WTC11 (cell line): ENCODE measurements at regions of chr16 and their contacts with region 1.

Region 1: GRCh38 chr16:87636072-87636684 is 33.9 kb downstream of the JPH3 start:
- DNase-seq: peak; percentile 88
- ATAC-seq: peak; percentile 91
- H3K4me3 Mint-ChIP-seq: peak overlapping the region; percentile 43
- H3K27ac Mint-ChIP-seq: no peak overlapping the region
- H3K4me1 Mint-ChIP-seq: peaks cover 9% of the 10 kb centered on the region
- H3K27me3 Mint-ChIP-seq: no peaks in the 10 kb centered on the region
- CTCF ChIP-seq: peak; percentile 35; the same call in 1 of the 2 replicates

Region 2: DNA sequence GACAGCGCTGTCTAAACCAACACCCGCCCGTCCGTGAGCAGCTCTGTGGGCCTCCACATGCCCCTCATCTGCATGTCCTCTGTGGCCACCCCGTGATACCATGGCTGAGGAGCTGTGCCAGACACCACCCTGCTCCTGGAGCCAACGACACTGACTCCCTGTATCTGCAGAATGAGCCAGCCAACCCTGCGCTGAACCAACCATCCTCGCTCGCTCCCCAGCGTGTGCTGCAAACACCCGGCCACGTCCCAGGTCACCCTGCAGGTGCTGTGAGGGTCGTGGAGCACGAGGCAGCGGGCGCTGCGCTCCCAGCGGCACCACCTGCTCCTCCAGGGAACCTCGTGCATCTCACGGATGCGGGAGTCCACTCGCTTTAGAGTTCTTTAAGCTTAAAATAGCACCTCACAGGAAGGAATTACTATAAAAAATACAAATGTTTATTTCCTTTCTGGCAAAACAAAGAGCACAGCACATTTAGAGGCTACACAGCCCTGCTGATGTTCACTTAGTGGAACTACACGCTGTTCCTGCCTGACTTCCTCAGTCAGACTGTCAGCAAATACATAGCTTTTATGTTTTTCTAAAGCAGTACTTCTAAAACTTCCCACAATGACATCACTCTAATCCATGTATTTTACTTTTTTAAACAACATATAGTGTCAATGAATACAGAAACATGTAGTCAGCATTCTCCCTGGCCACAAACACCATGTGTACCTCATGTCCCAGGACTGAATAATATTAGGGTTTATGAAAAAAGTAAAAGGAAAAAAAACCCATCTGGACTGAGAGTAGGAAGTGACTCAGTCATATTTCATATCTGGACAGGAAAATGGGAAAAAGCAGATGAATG is 200.6 kb before region 1 on chr16:
- CTCF ChIA-PET with region 1: interaction called, 11 read pairs
- POLR2A ChIA-PET with region 1: no interaction called
- DNase-seq: no peak
- ATAC-seq: no peak
- H3K4me3 Mint-ChIP-seq: no peak overlapping the region
- H3K27ac Mint-ChIP-seq: no peak overlapping the region; the same call in 1 of the 2 replicates
- H3K4me1 Mint-ChIP-seq: peaks cover 12% of the 10 kb centered on the region
- H3K27me3 Mint-ChIP-seq: no peaks in the 10 kb centered on the region
- CTCF ChIP-seq: no peak

Region 3: GRCh38 chr16:87550496-87550961 is 85.6 kb before region 1 on chr16:
- CTCF ChIA-PET with region 1: interaction called, 10 read pairs
- POLR2A ChIA-PET with region 1: no interaction called
- DNase-seq: peak; percentile 79
- ATAC-seq: peak; percentile 71
- H3K4me3 Mint-ChIP-seq: no peak overlapping the region
- H3K27ac Mint-ChIP-seq: no peak overlapping the region
- H3K4me1 Mint-ChIP-seq: no peaks in the 10 kb centered on the region
- H3K27me3 Mint-ChIP-seq: peaks cover 2% of the 10 kb centered on the region
- CTCF ChIP-seq: peak; percentile 98

Region 4: GRCh38 chr16:87581833-87582203 is 54.4 kb before region 1 on chr16:
- CTCF ChIA-PET with region 1: interaction called, 235 read pairs
- POLR2A ChIA-PET with region 1: no interaction called
- DNase-seq: no peak
- ATAC-seq: no peak
- H3K4me3 Mint-ChIP-seq: no peak overlapping the region
- H3K27ac Mint-ChIP-seq: 0 out of 2 replicates have a peak overlapping the region, but pooled peaks have one; percentile 9
- H3K4me1 Mint-ChIP-seq: peaks cover 22% of the 10 kb centered on the region
- H3K27me3 Mint-ChIP-seq: no peaks in the 10 kb centered on the region
- CTCF ChIP-seq: no peak

Region 5: DNA sequence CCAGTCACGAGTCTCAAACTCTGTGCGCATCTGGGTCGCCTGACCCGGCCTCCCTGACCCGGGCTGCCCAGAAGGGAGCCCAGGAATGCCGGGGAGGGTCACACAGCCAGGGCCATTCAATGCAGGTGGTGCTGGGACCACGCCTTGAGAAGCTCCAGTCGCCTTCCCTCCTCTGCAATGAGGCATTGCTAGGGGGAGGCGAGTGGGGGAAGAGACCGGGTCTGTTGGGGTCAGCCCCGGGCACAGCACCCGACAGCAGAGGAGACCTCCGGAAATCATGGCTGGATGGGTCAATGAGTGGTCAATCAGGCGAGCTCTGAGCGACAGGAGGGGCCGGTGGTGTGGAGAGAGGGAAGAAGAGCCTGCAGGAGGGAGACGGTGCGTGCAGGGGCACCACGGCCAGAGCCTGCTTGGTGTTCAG is 20.5 kb before region 1 on chr16:
- CTCF ChIA-PET with region 1: interaction called, 31 read pairs
- POLR2A ChIA-PET with region 1: no interaction called
- DNase-seq: no peak
- ATAC-seq: no peak
- H3K4me3 Mint-ChIP-seq: no peak overlapping the region
- H3K27ac Mint-ChIP-seq: no peak overlapping the region
- H3K4me1 Mint-ChIP-seq: peaks cover 13% of the 10 kb centered on the region
- H3K27me3 Mint-ChIP-seq: no peaks in the 10 kb centered on the region
- CTCF ChIP-seq: no peak

Region 6: DNA sequence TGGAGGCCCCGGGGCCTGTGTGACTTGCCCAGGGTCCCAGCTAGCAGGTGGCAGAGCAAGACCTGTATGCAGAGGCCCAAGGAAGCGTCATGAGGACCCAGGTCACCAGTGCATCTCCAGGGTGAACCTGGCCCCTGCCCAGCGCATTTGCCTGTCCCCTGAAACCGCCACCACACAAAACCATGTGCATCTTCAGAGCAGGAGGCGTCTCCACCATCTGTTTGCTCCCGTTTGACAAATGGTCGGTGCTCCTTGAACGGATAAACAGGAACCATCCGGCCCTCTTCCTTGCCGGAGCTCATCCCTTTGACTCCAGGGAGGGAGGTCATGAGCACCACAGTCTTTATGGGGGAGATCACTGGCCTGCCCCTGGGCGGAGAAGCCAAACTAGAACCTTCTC is 28.6 kb after region 1 on chr16:
- CTCF ChIA-PET with region 1: interaction called, 11 read pairs
- POLR2A ChIA-PET with region 1: no interaction called
- DNase-seq: no peak
- ATAC-seq: no peak
- H3K4me3 Mint-ChIP-seq: no peak overlapping the region
- H3K27ac Mint-ChIP-seq: no peak overlapping the region
- H3K4me1 Mint-ChIP-seq: peaks cover 14% of the 10 kb centered on the region
- H3K27me3 Mint-ChIP-seq: no peaks in the 10 kb centered on the region
- CTCF ChIP-seq: no peak

Region 7: DNA sequence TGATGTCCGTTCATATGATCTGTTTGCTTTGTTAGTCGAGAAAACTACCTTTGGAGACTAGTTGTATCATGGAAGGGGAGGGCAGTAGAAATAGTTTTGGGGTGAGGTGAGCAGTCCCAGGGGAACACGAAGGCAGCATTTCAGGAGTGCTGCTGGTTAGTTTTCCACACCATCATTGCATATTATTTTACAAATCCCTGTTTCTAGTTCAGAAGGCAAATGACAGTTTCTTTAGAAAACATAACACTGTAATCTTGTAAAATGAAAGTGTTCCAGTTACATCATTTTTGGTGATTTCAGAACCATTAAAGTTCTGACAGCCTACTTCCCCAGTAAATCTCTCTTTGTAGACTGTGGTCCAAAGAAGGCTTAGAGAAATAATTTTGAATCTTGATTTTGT is 340.5 kb after region 1 on chr16:
- CTCF ChIA-PET with region 1: no interaction called
- POLR2A ChIA-PET with region 1: no interaction called
- DNase-seq: no peak
- ATAC-seq: no peak
- H3K4me3 Mint-ChIP-seq: no peak overlapping the region
- H3K27ac Mint-ChIP-seq: 0 out of 2 replicates have a peak overlapping the region, but pooled peaks have one; percentile 60
- H3K4me1 Mint-ChIP-seq: no peaks in the 10 kb centered on the region
- H3K27me3 Mint-ChIP-seq: no peaks in the 10 kb centered on the region; the same call in 1 of the 2 replicates
- CTCF ChIP-seq: no peak